Naive thymus-derived CD4-positive, alpha-beta T cell (primary cell): ENCODE measurements at regions of chr3 and their contacts with region 1.

Region 1: GRCh38 chr3:15205934-15206661 is at the start of gene CAPN7:
- DNase-seq: peak; percentile 90 to 98 (median 92)
- ATAC-seq: peak; percentile 96
- H3K4me3 ChIP-seq: peak within 1 kb of the TSS; percentile 91
- H3K4me3 Mint-ChIP-seq: peak within 1 kb of the TSS; percentile 85 to 96 (median 94)
- H3K27ac ChIP-seq: peak within 1 kb of the TSS; percentile 94
- H3K27ac Mint-ChIP-seq: peak within 1 kb of the TSS; percentile 87 to 96 (median 93)
- H3K4me1 ChIP-seq: peaks cover 11 to 15% of the 10 kb centered on the region in 2 donors
- H3K4me1 Mint-ChIP-seq: peaks cover 19 to 52% (median 36%) of the 10 kb centered on the region in 7 donors
- H3K27me3 ChIP-seq: no peaks in the 10 kb centered on the region
- H3K27me3 Mint-ChIP-seq: no peaks in the 10 kb centered on the region
- total RNA-seq, gene CAPN7: 34.4 to 104 (median 70.4) TPM

Region 2: DNA sequence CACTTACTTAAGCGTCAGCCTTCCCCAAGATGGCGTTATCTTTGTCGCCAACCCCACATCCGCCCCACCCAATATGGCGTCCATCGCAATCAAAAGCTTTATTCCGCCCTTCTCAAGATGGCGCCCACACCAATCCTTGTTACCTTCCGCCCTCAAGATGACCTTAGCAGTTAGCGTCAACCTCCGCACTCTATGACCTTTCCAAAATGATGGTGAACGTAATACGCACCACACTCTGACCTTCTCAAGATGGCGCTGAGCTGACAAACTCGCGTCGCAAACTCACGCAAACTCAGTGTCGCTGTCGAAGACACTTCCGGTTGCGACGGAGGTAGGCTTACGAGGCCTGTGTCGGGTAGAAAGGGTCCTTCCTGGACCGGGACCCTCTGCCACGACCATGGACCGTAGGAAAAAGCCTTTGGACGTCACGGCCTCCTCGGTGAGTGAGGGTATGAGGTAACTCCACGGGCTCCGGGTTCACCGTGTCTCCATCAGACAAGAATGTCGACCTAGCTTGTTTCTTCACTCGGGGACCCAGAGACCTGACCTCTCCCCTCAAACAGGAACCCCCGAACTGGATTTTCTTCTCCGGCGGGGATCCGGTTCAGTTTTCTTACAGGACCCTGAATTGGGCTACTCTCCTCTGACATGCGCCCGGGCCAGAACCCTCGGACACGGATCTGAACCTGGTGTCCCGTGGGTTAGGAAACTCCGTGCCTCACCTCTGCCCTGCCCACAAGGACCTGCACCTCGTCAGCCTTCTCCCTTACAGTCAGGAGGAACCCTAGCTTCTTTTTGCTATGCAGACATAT is 554.5 kb before region 1 on chr3 and contains the start of gene CCDC174:
- CTCF ChIA-PET with region 1: no interaction called
- POLR2A ChIA-PET with region 1: no interaction called
- intact Hi-C with region 1: loop called in 1 of 2 experiments (anchors 5 kb)
- DNase-seq: peak; percentile 84 to 98 (median 96)
- ATAC-seq: peak; percentile 99
- H3K4me3 ChIP-seq: peak within 1 kb of the TSS; percentile 90
- H3K4me3 Mint-ChIP-seq: peak within 1 kb of the TSS; percentile 84 to 100 (median 96)
- H3K27ac ChIP-seq: peak within 1 kb of the TSS; percentile 94
- H3K27ac Mint-ChIP-seq: peak within 1 kb of the TSS; percentile 92 to 100 (median 98)
- H3K4me1 ChIP-seq: peaks cover 21 to 25% of the 10 kb centered on the region in 2 donors
- H3K4me1 Mint-ChIP-seq: peaks cover 25 to 80% (median 66%) of the 10 kb centered on the region in 7 donors
- H3K27me3 ChIP-seq: no peaks in the 10 kb centered on the region
- H3K27me3 Mint-ChIP-seq: peaks cover 0 to 2% (median 0%) of the 10 kb centered on the region in 5 donors
- total RNA-seq, gene CCDC174: 21.6 to 59.2 (median 46.2) TPM

Region 3: DNA sequence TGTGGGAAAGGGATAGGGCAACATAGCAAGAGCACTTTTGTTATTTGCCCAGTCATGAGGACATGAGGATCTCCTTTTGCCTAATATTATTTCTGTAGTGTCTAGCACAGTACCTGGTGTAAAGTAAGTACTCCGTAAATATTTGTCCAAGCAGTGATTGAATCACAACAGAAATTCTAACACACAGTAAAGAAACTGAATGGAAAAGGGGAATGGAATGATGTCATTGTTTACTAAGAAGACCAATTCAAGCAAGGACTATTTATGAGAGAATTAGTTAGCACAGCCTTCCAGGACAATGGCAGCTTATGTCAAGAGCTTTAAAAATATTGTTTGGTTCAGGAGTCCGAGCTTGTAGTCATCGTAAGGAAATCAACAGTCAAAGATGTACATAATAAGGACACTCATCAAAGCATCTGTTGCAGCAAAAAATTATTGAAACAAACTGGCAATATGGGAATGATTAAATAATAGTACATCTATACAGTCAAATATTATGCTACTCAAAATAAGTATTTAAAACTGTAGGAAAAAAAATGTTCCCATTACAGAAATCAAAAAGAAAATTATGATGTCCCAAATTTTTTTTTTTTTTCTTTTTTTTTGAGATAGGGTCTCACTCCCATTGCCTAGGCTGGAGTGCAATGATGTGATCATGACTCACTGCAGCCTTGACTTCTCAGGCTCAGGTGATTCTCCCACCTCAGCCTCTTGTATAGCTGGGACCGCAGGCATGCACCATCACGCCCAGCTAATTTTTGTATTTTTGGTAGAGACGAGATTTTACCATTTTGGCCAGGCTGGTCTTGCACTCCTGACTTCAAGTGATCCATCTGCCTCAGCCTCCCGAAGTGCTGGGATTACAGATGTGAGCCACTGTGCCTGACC is 17.8 kb after region 1 on chr3:
- CTCF ChIA-PET with region 1: interaction called, 8 read pairs
- POLR2A ChIA-PET with region 1: interaction called, 10 read pairs
- intact Hi-C with region 1: loop called in 1 of 2 experiments (anchors 2 kb)
- DNase-seq: no peak
- ATAC-seq: no peak
- H3K4me3 ChIP-seq: no peak overlapping the region
- H3K4me3 Mint-ChIP-seq: no peak overlapping the region
- H3K27ac ChIP-seq: no peak overlapping the region
- H3K27ac Mint-ChIP-seq: peak overlapping the region in 1 of 9 donors; percentile 28
- H3K4me1 ChIP-seq: no peaks in the 10 kb centered on the region
- H3K4me1 Mint-ChIP-seq: peaks cover 0 to 13% (median 5%) of the 10 kb centered on the region in 7 donors
- H3K27me3 ChIP-seq: no peaks in the 10 kb centered on the region
- H3K27me3 Mint-ChIP-seq: no peaks in the 10 kb centered on the region

Region 4: DNA sequence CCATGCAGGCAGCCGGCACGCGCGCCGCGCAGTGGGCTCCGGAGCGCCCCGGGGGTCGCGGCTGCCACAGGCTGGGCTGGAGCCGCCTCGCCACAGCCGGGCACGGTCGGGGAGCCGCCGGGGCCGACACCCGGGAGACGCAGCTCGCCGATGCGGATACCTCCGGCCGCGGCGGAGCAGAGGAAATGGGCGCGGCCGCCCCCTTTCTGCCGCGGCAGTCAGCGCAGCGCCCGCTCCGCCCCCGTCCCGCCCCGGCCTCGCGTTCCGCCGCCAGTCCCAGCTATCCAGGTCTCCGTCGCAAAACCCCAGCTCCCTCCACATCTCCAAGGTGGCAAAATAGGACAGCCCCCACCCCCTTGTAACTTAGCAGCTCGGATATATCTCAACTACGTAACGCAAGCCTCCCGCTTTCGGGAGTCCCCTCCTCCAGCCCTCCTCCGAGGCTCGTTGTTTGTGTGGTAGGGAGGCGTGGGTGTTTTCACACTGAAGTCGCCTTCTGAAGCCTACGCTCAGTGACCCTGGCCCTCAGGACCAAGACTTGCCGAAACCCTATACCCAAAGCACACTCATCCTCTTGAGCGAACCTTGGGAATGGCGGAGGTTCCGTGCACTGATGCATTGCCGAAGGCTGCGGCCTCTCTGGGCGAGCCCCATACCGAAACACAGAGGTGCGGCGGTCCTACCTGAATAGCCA is 126.5 kb after region 1 on chr3 and contains the start of gene SH3BP5:
- CTCF ChIA-PET with region 1: interaction called, 6 read pairs
- POLR2A ChIA-PET with region 1: interaction called, 3 read pairs
- intact Hi-C with region 1: loop called in 1 of 2 experiments (anchors 1 kb)
- DNase-seq: peak; percentile 52 to 82 (median 71)
- ATAC-seq: peak; percentile 94
- H3K4me3 ChIP-seq: peak within 1 kb of the TSS; percentile 96
- H3K4me3 Mint-ChIP-seq: peak within 1 kb of the TSS; percentile 93 to 99 (median 95)
- H3K27ac ChIP-seq: peak within 1 kb of the TSS; percentile 86
- H3K27ac Mint-ChIP-seq: peak within 1 kb of the TSS; percentile 87 to 95 (median 91)
- H3K4me1 ChIP-seq: peaks cover 37 to 45% of the 10 kb centered on the region in 2 donors
- H3K4me1 Mint-ChIP-seq: peaks cover 35 to 57% (median 54%) of the 10 kb centered on the region in 7 donors
- H3K27me3 ChIP-seq: no peaks in the 10 kb centered on the region
- H3K27me3 Mint-ChIP-seq: no peaks in the 10 kb centered on the region
- total RNA-seq, gene SH3BP5: 18.5 to 64.7 (median 39.5) TPM

Region 5: GRCh38 chr3:15427182-15427880 is 221.2 kb after region 1 on chr3 and contains the starts of genes EAF1 and METTL6:
- CTCF ChIA-PET with region 1: interaction called, 3 read pairs
- POLR2A ChIA-PET with region 1: interaction called, 11 read pairs
- intact Hi-C with region 1: loop called (anchors 1 kb)
- DNase-seq: peak; percentile 71 to 85 (median 84)
- ATAC-seq: peak; percentile 89
- H3K4me3 ChIP-seq: peak within 1 kb of the TSS; percentile 81
- H3K4me3 Mint-ChIP-seq: peak within 1 kb of the TSS; percentile 91 to 100 (median 98)
- H3K27ac ChIP-seq: peak within 1 kb of the TSS; percentile 91
- H3K27ac Mint-ChIP-seq: peak within 1 kb of the TSS; percentile 86 to 99 (median 94)
- H3K4me1 ChIP-seq: peaks cover 18 to 23% of the 10 kb centered on the region in 2 donors
- H3K4me1 Mint-ChIP-seq: peaks cover 47 to 82% (median 62%) of the 10 kb centered on the region in 7 donors
- H3K27me3 ChIP-seq: no peaks in the 10 kb centered on the region
- H3K27me3 Mint-ChIP-seq: no peaks in the 10 kb centered on the region
- total RNA-seq, gene EAF1: 17.8 to 61.9 (median 27.8) TPM
- total RNA-seq, gene METTL6: 7.9 to 23.0 (median 18.3) TPM

Region 6: GRCh38 chr3:15859507-15860013 is 653.5 kb after region 1 on chr3:
- CTCF ChIA-PET with region 1: interaction called, 3 read pairs
- POLR2A ChIA-PET with region 1: no interaction called
- intact Hi-C with region 1: loop called (anchors 2 kb)
- DNase-seq: peak; percentile 57 to 86 (median 71)
- ATAC-seq: peak; percentile 91
- H3K4me3 ChIP-seq: peak overlapping the region; percentile 63
- H3K4me3 Mint-ChIP-seq: peak overlapping the region; percentile 85 to 99 (median 95)
- H3K27ac ChIP-seq: peak overlapping the region; percentile 77
- H3K27ac Mint-ChIP-seq: peak overlapping the region in 6 of 9 donors; percentile 76 to 98 (median 92)
- H3K4me1 ChIP-seq: peaks cover 12 to 14% of the 10 kb centered on the region in 2 donors
- H3K4me1 Mint-ChIP-seq: peaks cover 21 to 50% (median 43%) of the 10 kb centered on the region in 7 donors
- H3K27me3 ChIP-seq: no peaks in the 10 kb centered on the region
- H3K27me3 Mint-ChIP-seq: peaks cover 0 to 10% (median 0%) of the 10 kb centered on the region in 5 donors